ENCODE measurements at regions of chr19 and their contacts with region 1.

Region 1: DNA sequence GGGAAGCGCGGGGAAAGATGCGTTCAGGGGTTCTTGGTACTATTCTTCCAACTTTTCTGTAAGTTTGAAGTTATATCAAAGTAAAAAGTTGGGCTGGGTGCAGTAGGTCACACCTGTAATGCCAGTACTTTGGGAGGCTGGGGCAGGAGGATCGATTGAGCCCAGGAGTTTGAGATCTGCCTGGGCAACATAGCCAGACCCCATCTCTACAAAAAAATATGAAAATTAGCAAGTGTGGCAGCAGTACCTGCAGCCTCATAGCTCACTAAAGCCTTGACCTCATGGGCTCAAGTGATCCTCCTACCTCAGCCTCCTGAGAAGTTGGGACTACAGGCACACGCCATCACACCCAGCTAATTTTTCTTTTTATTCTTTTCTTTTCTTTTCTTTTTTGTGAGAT is 12.4 kb upstream of the ZNF77 start:
- DNase-seq: no peak
- H3K4me3 ChIP-seq: no peak overlapping the region
- H3K27ac ChIP-seq: no peak overlapping the region
- H3K4me1 ChIP-seq: peaks cover 0 to 7% (median 4%) of the 10 kb centered on the region in 6 donors
- H3K27me3 ChIP-seq: no peaks in the 10 kb centered on the region
- CTCF ChIP-seq: no peak
- POLR2A ChIP-seq: no peak

Region 2: DNA sequence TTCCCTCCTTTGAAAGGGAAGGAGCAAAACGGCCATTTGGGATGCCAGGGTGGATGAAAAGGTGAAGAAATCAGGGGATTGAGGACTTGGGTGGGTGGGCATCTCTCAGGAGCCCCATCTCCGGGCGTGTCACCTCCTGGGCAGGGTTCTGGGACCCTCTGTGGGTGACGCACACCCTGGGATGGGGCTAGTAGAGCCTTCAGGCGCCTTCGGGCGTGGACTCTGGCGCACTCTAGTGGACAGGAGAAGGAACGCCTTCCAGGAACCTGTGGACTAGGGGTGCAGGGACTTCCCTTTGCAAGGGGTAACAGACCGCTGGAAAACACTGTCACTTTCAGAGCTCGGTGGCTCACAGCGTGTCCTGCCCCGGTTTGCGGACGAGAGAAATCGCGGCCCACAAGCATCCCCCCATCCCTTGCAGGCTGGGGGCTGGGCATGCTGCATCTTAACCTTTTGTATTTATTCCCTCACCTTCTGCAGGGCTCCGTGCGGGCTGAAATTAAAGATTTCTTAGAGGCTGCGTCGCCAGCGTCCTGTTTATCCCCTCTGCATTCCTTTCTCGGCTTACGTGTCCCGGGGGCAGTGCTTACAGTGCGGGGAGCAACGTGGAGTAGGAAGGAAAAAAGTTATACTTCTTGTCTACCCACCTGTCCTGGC is 206.2 kb after region 1 on chr19:
- intact Hi-C with region 1: loop called (anchors 5 kb)
- DNase-seq: peak; percentile 94
- H3K4me3 ChIP-seq: peak overlapping the region in 1 of 8 donors; percentile 58
- H3K27ac ChIP-seq: peak overlapping the region in 5 of 8 donors; percentile 77 to 97 (median 92)
- H3K4me1 ChIP-seq: peaks cover 0 to 38% (median 14%) of the 10 kb centered on the region in 6 donors
- H3K27me3 ChIP-seq: no peaks in the 10 kb centered on the region
- CTCF ChIP-seq: peak; percentile 79 to 98 (median 92)
- POLR2A ChIP-seq: no peak